ENCODE measurements at regions of chr3 and their contacts with region 1.

Region 1: GRCh38 chr3:194556086-194557056 is 69.6 kb upstream of the ATP13A3 start:
- DNase-seq: no peak
- H3K4me3 ChIP-seq: no peak overlapping the region
- H3K27ac ChIP-seq: no peak overlapping the region
- H3K4me1 ChIP-seq: peaks cover 2% of the 10 kb centered on the region
- H3K27me3 ChIP-seq: no peaks in the 10 kb centered on the region
- CTCF ChIP-seq: no peak

Region 2: GRCh38 chr3:194508491-194509453 is 47.6 kb before region 1 on chr3:
- CTCF ChIA-PET with region 1: no interaction called
- POLR2A ChIA-PET with region 1: interaction called, 18 read pairs
- intact Hi-C with region 1: no loop called
- DNase-seq: peak; percentile 32
- H3K4me3 ChIP-seq: no peak overlapping the region
- H3K27ac ChIP-seq: peak overlapping the region; percentile 54
- H3K4me1 ChIP-seq: peaks cover 20% of the 10 kb centered on the region
- H3K27me3 ChIP-seq: no peaks in the 10 kb centered on the region
- CTCF ChIP-seq: no peak

Region 3: GRCh38 chr3:195178124-195178775 is 621.9 kb after region 1 on chr3:
- CTCF ChIA-PET with region 1: no interaction called
- POLR2A ChIA-PET with region 1: no interaction called
- intact Hi-C with region 1: no loop called
- DNase-seq: peak; percentile 68
- H3K4me3 ChIP-seq: no peak overlapping the region
- H3K27ac ChIP-seq: peak overlapping the region; percentile 89
- H3K4me1 ChIP-seq: peaks cover 60% of the 10 kb centered on the region
- H3K27me3 ChIP-seq: no peaks in the 10 kb centered on the region
- CTCF ChIP-seq: no peak

Region 4: DNA sequence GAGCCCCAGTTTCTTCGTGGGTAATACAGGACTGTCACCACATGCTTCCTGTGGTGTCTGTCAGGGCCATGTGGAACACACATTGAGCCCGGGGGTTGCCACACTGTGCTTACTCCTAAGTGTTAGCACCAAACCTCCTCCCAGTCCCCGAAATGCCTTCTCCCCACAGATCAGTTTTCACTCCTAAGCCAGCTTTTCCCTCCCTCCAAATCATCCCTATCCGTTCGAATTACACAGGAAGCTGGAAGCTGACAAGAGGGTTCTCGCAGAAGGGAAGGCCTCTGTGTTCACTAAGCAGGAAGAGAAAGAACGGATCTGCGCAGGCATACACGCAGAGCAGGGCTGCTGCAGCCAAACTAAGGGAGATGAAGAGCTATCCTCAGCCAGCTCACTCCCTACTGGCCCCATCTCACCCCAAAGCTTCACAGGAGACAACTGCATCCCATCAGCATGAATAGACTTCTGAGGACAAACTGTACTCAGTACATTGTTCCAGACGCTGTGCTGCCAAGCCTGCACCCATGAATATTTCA is 682.3 kb after region 1 on chr3:
- CTCF ChIA-PET with region 1: no interaction called
- POLR2A ChIA-PET with region 1: no interaction called
- intact Hi-C with region 1: no loop called
- DNase-seq: no peak
- H3K4me3 ChIP-seq: no peak overlapping the region
- H3K27ac ChIP-seq: no peak overlapping the region
- H3K4me1 ChIP-seq: no peaks in the 10 kb centered on the region
- H3K27me3 ChIP-seq: no peaks in the 10 kb centered on the region
- CTCF ChIP-seq: no peak